Esophagus muscularis mucosa (tissue), 4 donors: ENCODE measurements at regions of chr6 and their contacts with region 1.

Region 1: DNA sequence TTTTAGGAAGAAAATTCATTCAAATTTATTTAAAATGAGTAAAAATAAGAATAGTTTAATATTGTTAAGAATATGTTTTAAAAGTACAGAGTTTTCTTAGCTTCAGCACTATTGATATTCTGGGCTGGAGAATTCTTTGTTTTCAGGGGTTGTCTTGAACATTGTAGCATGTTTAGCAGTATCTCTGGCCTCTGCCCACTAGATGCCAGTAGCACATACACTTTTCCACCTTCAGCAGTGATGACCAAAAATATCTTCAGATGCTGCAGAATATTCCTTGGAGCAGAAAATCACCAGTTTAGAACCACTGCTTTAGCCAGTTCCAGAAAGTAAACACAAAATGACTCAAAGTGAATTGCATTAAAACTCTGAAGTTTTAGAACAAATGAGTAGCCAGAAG is 19.4 kb upstream of the SDHAF4 start:
- DNase-seq: no peak
- H3K4me3 ChIP-seq: no peak overlapping the region
- H3K27ac ChIP-seq: no peak overlapping the region
- H3K4me1 ChIP-seq: peaks cover 0 to 7% (median 0%) of the 10 kb centered on the region in 4 donors
- H3K27me3 ChIP-seq: no peaks in the 10 kb centered on the region
- CTCF ChIP-seq: peak; percentile 16 to 40 (median 20)
- EP300 ChIP-seq: no peak
- POLR2A ChIP-seq: no peak

Region 2: GRCh38 chr6:70592391-70593117 is 45.2 kb after region 1 on chr6:
- intact Hi-C with region 1: no loop called
- DNase-seq: no peak
- H3K4me3 ChIP-seq: no peak overlapping the region
- H3K27ac ChIP-seq: no peak overlapping the region
- H3K4me1 ChIP-seq: peaks cover 0 to 12% (median 9%) of the 10 kb centered on the region in 4 donors
- H3K27me3 ChIP-seq: no peaks in the 10 kb centered on the region
- CTCF ChIP-seq: no peak
- EP300 ChIP-seq: no peak
- POLR2A ChIP-seq: no peak

Region 3: DNA sequence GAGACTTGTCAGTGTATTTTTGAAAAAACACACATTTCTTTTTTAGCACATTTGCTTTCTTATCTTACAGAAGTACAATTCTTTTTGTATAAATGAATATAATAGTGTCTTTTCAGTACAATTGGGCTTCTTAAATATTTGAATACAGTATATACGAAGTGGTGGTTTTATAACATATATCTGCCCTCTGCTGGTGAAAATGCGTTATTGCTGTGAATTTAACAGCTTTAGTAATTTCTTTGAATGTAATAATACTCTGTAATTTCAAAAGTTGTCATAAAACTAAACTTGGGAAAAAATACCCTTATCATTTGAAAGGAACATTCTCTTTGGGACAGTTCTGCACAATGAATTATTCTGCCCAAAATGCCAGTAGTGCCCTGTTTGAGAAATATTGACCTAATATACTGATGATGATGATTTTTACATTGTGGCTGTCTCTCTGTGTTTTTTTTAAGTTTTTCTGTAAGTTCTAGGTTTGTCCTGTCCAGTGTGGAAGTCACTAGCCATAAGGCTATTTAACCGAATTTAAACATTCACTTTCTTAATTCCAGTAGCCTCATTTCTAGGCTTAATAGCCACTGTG is 139.3 kb after region 1 on chr6:
- intact Hi-C with region 1: loop called (anchors 5 kb)
- DNase-seq: no peak
- H3K4me3 ChIP-seq: no peak overlapping the region
- H3K27ac ChIP-seq: no peak overlapping the region
- H3K4me1 ChIP-seq: peaks cover 18 to 32% (median 25%) of the 10 kb centered on the region in 4 donors
- H3K27me3 ChIP-seq: no peaks in the 10 kb centered on the region
- CTCF ChIP-seq: peak; percentile 74 to 84 (median 83)
- EP300 ChIP-seq: no peak
- POLR2A ChIP-seq: no peak